Activated CD8-positive, alpha-beta memory T cell treated with anti-CD3 and anti-CD28 coated beads, Interleukin-2, amount 10 ng/mL, durations not matched to agents 7 days and 5 days (primary cell): ENCODE measurements at regions of chr1 and their contacts with region 1.

Region 1: DNA sequence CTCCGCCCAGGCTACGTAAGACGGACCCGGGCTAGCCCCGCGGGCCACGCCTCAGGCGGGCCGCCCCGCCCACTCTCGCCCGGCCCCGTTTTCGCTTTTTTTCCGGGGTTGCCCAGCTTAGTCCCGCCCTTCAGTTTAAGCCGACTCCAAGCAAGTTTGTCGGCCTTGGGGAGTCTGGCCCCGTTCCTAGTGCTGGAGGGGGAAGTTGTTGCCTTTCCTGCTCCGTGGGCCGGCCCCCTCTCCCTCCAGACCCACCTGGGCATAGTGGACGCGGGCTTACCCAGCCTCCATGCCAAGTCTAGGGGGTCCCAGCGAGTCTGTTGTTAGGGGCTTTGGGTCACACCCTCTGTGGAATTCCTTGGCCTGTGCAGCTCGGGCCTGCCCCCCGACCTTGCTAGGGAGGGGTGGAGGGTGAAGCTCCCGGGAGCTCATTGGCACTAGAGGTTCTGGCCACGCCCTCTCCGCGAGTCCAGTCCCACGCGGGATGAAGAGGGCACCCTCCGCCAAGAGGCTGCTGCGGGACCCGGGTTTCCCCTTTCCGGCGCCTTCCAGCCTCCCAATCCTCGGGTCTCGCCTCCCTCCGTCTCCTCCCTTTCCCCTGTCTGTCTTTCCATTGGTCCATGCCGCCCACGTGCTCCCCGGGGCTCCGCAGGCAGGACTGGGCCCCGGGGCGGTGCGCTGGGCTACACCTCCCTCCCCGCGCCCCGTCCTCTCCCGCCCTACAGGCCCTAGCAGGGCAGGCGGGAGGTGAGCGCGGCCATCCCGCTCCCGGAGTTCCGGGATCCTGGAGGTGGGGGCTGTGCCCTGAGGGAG is 3.3 kb downstream of the RUSC1 start:
- DNase-seq: peak; percentile 94
- ATAC-seq: peak; percentile 84
- H3K4me3 Mint-ChIP-seq: peak overlapping the region; percentile 85
- H3K27ac Mint-ChIP-seq: peak overlapping the region; percentile 78
- H3K4me1 Mint-ChIP-seq: peaks cover 48% of the 10 kb centered on the region
- H3K27me3 Mint-ChIP-seq: no peaks in the 10 kb centered on the region

Region 2: GRCh38 chr1:154974063-154974807 is 349.8 kb before region 1 on chr1 and contains the start of gene CKS1B:
- CTCF ChIA-PET with region 1: no interaction called
- DNase-seq: peak; percentile 98
- ATAC-seq: peak; percentile 89
- H3K4me3 Mint-ChIP-seq: no peak within 1 kb of the TSS
- H3K27ac Mint-ChIP-seq: no peak within 1 kb of the TSS
- H3K4me1 Mint-ChIP-seq: peaks cover 38% of the 10 kb centered on the region
- H3K27me3 Mint-ChIP-seq: no peaks in the 10 kb centered on the region
- total RNA-seq, gene CKS1B: 149 to 155 TPM

Region 3: GRCh38 chr1:155208541-155209311 is 115.3 kb before region 1 on chr1 and contains the start of gene MTX1:
- CTCF ChIA-PET with region 1: interaction called, 14 read pairs
- DNase-seq: peak; percentile 92
- ATAC-seq: peak; percentile 78
- H3K4me3 Mint-ChIP-seq: peak within 1 kb of the TSS; percentile 83
- H3K27ac Mint-ChIP-seq: peak within 1 kb of the TSS; percentile 88
- H3K4me1 Mint-ChIP-seq: peaks cover 34% of the 10 kb centered on the region
- H3K27me3 Mint-ChIP-seq: no peaks in the 10 kb centered on the region
- total RNA-seq, gene MTX1: 39.0 to 48.6 TPM

Region 4: DNA sequence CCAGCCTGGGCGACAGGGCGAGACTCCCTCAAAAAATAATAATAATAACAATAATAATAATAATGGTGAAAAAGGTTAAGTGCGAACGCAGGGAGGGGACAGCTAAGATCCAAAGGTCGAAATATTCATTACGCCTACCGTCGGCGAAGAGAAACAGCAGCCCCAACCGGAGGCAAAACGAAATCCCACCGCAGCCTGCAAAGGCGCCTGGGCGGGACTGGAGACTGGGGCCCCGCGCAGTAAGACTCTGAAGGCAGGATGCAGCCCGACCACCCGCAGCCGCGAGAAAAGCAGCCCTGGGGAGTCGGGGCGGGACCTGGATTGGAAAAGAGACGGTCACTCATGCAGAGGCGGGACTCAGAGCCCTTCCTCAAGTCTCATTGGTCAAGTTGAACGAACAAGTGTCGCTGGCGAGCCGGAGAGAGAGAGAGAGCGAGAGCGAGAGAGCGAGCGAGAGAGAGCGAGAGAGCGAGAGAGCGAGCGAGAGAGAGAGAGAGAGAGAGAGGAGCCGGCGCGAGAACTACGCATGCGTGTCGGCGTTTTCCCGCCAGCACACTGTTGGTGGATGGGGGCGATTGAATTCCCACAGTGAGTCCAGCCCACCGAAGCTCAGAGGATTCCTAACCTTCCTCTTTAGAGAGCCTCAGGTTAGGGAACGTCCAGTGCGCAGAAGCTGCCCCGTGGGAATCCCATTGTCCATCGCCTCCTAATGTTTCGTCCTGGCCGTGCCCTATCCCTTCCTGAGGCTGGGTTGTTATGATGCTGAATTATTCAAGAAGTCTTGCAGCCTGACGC is 79.4 kb before region 1 on chr1:
- CTCF ChIA-PET with region 1: interaction called, 160 read pairs
- DNase-seq: peak; percentile 100
- ATAC-seq: peak; percentile 97
- H3K4me3 Mint-ChIP-seq: peak overlapping the region; percentile 74
- H3K27ac Mint-ChIP-seq: peak overlapping the region; percentile 98
- H3K4me1 Mint-ChIP-seq: peaks cover 51% of the 10 kb centered on the region
- H3K27me3 Mint-ChIP-seq: peaks cover 3% of the 10 kb centered on the region

Region 5: GRCh38 chr1:155261852-155262673 is 61.9 kb before region 1 on chr1 and contains the start of gene SCAMP3:
- CTCF ChIA-PET with region 1: interaction called, 18 read pairs
- DNase-seq: peak; percentile 95
- ATAC-seq: peak; percentile 97
- H3K4me3 Mint-ChIP-seq: peak within 1 kb of the TSS; percentile 95
- H3K27ac Mint-ChIP-seq: peak within 1 kb of the TSS; percentile 86
- H3K4me1 Mint-ChIP-seq: peaks cover 39% of the 10 kb centered on the region
- H3K27me3 Mint-ChIP-seq: no peaks in the 10 kb centered on the region
- total RNA-seq, gene SCAMP3: 82.0 to 108 TPM

Region 6: GRCh38 chr1:155277070-155277895 is 46.7 kb before region 1 on chr1 and contains the start of gene HCN3:
- CTCF ChIA-PET with region 1: interaction called, 26 read pairs
- DNase-seq: peak; percentile 96
- ATAC-seq: peak; percentile 70
- H3K4me3 Mint-ChIP-seq: peak within 1 kb of the TSS; percentile 68
- H3K27ac Mint-ChIP-seq: peak within 1 kb of the TSS; percentile 49
- H3K4me1 Mint-ChIP-seq: peaks cover 36% of the 10 kb centered on the region
- H3K27me3 Mint-ChIP-seq: no peaks in the 10 kb centered on the region
- total RNA-seq, gene HCN3: 5.4 to 6.1 TPM

Region 7: DNA sequence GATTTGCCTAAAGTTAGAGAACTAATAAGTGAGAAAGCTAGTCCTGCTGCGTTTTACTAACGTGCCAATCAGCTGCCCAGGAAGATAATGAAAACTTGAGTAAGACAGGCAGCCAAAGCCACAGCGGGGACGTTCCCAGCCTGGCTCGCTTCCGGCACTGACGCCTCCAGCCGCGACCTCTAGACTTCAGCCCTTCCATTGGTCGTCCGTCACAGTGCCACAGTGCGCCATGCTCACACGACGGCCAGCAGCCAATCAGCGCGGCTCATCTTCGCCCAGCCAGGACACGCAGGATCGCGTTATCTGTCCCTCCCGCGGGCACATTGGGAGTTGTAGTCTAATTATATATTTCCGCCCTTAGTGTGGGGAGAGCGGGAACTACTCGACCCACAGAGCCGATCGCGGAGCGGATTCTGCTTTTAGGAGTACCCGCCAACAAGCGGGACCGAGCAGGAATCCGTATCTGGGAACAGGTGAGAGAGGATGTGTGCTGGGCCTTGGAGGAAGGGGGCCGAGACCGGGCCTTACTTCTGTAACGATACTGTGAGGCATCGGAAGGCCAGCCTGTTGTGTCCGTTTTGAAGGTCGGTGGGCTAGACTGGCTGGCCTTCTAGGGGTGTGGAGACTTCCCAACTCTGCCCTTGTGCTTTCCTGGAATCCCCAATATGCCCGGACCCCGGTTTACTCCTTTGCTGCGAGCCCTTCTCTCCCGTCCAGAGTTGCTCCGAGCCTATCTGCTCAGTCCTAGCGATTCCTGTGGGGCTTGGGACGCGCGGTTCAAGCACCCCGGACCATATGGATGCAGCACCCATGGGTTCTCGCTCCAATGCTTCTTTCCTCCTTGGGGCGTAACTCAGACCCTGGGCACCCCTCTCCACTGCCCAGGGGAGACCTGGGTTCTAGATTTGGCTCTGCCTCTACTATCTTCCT is 15.2 kb before region 1 on chr1 and contains the start of gene FDPS:
- CTCF ChIA-PET with region 1: interaction called, 56 read pairs
- DNase-seq: peak; percentile 99
- ATAC-seq: peak; percentile 99
- H3K4me3 Mint-ChIP-seq: peak within 1 kb of the TSS; percentile 97
- H3K27ac Mint-ChIP-seq: peak within 1 kb of the TSS; percentile 96
- H3K4me1 Mint-ChIP-seq: peaks cover 42% of the 10 kb centered on the region
- H3K27me3 Mint-ChIP-seq: no peaks in the 10 kb centered on the region
- total RNA-seq, gene FDPS: 329 to 406 TPM

Region 8: GRCh38 chr1:155410931-155411330 is 86.9 kb after region 1 on chr1:
- CTCF ChIA-PET with region 1: no interaction called
- DNase-seq: no peak
- ATAC-seq: no peak
- H3K4me3 Mint-ChIP-seq: no peak overlapping the region
- H3K27ac Mint-ChIP-seq: no peak overlapping the region
- H3K4me1 Mint-ChIP-seq: peaks cover 2% of the 10 kb centered on the region
- H3K27me3 Mint-ChIP-seq: no peaks in the 10 kb centered on the region